PC-3 (cell line): ENCODE measurements at regions of chr7 and their contacts with region 1.

Region 1: GRCh38 chr7:101217388-101218235 is at the starts of genes PLOD3 and ZNHIT1:
- DNase-seq: peak; percentile 98
- ATAC-seq: peak; percentile 85
- H3K4me3 ChIP-seq: peak within 1 kb of the TSS; percentile 80
- H3K27ac ChIP-seq: peak within 1 kb of the TSS; percentile 83
- H3K4me1 ChIP-seq: peaks cover 11% of the 10 kb centered on the region
- H3K27me3 ChIP-seq: no peaks in the 10 kb centered on the region
- CTCF ChIP-seq: no peak
- total RNA-seq, gene PLOD3: 60.8 and 66.6 TPM in 2 replicates
- total RNA-seq, gene ZNHIT1: 161 and 188 TPM in 2 replicates

Region 2: GRCh38 chr7:101173752-101174244 is 43.8 kb before region 1 on chr7:
- CTCF ChIA-PET with region 1: no interaction called
- POLR2A ChIA-PET with region 1: no interaction called
- intact Hi-C with region 1: no loop called
- DNase-seq: peak; percentile 75
- ATAC-seq: peak; percentile 77
- H3K4me3 ChIP-seq: peak overlapping the region; percentile 57
- H3K27ac ChIP-seq: no peak overlapping the region
- H3K4me1 ChIP-seq: peaks cover 28% of the 10 kb centered on the region
- H3K27me3 ChIP-seq: peaks cover 41% of the 10 kb centered on the region
- CTCF ChIP-seq: no peak

Region 3: DNA sequence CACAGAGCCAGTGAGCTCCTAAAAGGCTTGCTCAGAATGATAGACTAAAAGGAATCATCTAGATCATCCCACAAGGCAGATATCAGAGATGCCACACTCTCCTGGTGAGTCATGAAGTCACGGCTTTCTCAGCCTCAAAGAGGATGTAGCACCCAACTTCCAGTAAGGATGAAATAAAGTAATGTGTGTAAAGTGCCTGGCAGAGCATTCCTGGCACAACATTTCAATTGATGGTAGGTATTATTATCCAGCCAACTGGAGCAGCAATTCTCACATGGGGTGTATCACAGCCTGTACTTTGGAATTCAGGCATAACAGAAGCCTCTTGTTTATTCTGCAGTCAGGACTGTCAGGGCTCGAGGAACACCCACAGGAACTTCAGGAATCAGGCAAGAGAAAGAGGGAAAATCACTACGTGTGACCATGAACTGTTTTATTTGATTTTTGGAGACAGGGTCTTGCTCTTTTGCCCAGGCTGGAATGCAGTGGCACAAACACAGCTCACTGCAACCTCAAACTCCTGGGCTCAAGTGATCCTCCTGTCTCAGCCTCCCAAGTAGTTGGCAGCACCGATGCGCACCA is 32.3 kb before region 1 on chr7:
- CTCF ChIA-PET with region 1: interaction called, 12 read pairs
- POLR2A ChIA-PET with region 1: no interaction called
- intact Hi-C with region 1: no loop called
- DNase-seq: no peak
- ATAC-seq: peak; percentile 25; the same call in 1 of the 2 replicates
- H3K4me3 ChIP-seq: no peak overlapping the region
- H3K27ac ChIP-seq: no peak overlapping the region
- H3K4me1 ChIP-seq: no peaks in the 10 kb centered on the region; the same call in 1 of the 2 replicates
- H3K27me3 ChIP-seq: no peaks in the 10 kb centered on the region
- CTCF ChIP-seq: no peak

Region 4: DNA sequence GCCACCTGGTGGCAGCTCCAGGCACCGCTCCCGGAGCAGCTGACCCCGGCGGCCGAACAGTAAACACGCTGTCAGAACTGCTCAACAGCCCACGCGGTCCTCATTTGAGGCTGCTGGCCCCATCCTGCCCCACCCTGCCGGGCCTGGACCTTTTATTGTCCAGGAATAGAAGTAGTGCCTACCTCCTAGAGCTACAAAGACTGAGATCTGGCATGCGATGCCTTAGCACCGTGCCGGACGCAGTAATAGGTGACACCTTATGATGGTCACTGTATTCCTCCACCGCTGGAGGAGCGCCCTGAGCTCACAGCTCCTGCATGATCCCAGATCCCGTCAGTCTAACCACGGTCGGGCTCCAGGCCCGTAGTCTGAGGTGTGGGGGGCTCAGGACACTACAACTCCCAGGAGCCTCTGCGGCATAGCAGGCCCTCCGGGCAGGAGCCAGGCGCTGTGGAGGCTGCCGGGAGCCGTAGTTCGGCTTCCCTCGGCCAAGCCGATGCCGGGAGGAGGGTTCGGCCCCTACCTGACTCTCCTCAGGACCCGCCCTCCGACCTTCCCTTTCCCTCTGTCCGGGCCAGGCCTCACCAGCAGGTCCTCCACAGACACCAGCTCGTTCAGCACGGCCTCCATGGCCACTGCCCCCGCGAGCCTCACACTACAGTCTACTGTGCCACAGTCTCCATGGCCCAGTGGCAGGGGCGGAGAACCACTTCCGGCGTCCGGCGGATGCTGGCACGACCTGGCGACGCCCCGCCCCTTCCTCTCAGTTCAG is 26.9 kb after region 1 on chr7 and contains the start of gene FIS1:
- CTCF ChIA-PET with region 1: interaction called, 3 read pairs
- POLR2A ChIA-PET with region 1: interaction called, 25 read pairs
- intact Hi-C with region 1: loop called (anchors 1 kb)
- DNase-seq: peak; percentile 86
- ATAC-seq: peak; percentile 94
- H3K4me3 ChIP-seq: peak within 1 kb of the TSS; percentile 97
- H3K27ac ChIP-seq: peak within 1 kb of the TSS; percentile 78
- H3K4me1 ChIP-seq: peaks cover 13% of the 10 kb centered on the region
- H3K27me3 ChIP-seq: no peaks in the 10 kb centered on the region
- CTCF ChIP-seq: peak; percentile 90
- total RNA-seq, gene FIS1: 146 and 199 TPM in 2 replicates

Region 5: DNA sequence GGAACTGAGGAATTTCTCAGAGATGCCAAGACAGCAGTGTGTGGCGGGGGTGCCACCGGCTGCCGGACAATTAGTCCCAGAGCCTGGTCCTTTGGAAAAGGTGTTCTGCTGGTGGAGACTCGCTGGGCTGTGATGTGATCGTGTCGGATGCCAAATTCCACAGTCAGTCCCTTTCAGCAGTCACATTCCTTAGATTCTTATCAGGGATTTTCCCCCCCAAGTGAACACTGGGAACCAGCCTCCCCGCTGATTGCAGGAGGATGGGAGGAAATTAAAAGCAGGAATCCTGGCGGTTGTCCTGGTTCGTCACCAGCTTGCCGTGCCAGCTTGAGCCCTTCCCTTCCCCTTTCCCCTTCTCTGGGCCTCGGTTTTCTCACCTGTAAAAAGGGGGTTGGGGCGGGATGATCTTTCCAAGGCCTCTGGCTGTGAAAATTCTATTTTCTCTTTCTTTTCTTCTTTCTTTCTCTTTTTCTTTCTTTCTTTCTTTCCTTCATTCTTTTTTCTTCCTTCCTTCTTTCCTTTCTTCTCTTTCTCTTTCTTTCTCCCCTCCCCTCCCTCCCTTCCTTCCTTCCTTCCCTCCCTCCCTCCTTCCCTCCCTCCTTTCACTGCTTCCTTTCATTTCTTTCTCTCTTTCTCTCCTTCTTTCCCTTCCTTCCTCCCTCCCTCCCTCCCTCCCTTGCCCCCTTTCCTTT is 184.6 kb after region 1 on chr7:
- CTCF ChIA-PET with region 1: no interaction called
- POLR2A ChIA-PET with region 1: no interaction called
- intact Hi-C with region 1: no loop called
- DNase-seq: peak; percentile 76
- ATAC-seq: peak; percentile 73
- H3K4me3 ChIP-seq: peak overlapping the region; percentile 59
- H3K27ac ChIP-seq: no peak overlapping the region
- H3K4me1 ChIP-seq: peaks cover 8% of the 10 kb centered on the region
- H3K27me3 ChIP-seq: 0 out of 2 replicates have a peak, but pooled peaks cover 4% of the 10 kb centered on the region
- CTCF ChIP-seq: no peak